Kidney (tissue), 22 donors: ENCODE measurements at regions of chr1 and their contacts with region 1.

Region 1: DNA sequence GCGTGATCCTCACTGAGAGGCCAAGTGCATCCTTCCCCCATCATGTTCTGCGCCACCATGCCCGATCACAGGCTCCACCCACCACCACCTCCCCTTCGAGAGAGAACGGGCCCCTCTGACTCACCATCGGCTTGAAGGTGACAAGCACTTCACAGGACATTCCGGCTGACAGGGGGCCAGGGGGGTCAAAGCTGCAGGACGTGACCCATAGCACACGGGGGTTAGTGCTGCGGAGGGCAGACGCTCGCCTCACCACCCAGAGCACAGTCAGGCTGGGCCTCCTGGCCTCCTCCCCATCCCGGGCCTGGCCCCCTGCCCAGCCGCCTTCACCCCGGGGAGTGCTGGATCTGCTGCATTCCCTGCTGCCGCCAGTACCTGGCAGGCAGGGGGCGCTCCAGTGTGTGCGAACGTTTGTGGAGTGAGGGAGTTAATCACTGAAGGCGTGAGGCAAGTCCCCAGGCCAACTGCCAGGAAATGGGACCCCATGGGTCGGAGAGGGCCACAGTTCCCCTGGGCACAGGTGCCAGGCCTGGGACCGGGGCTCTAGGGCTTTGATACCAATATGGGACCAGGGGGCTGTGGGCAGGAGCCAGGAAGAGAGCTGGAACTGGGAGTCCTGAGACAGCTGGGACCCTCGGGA is 40.9 kb upstream of the TMEM52 start:
- DNase-seq: peak; percentile 88 to 92 (median 90)
- H3K4me3 ChIP-seq: no peak overlapping the region
- H3K27ac ChIP-seq: no peak overlapping the region
- H3K4me1 ChIP-seq: no peaks in the 10 kb centered on the region
- H3K27me3 ChIP-seq: no peaks in the 10 kb centered on the region
- CTCF ChIP-seq: peak; percentile 70

Region 2: GRCh38 chr1:2044510-2045319 is 84.8 kb after region 1 on chr1:
- intact Hi-C with region 1: loop called (anchors 10 kb)
- DNase-seq: peak; percentile 71 to 89 (median 81)
- H3K4me3 ChIP-seq: no peak overlapping the region
- H3K27ac ChIP-seq: no peak overlapping the region
- H3K4me1 ChIP-seq: peaks cover 2 to 18% (median 5%) of the 10 kb centered on the region in 3 donors
- H3K27me3 ChIP-seq: peaks cover 2% of the 10 kb centered on the region
- CTCF ChIP-seq: peak; percentile 94

Region 3: DNA sequence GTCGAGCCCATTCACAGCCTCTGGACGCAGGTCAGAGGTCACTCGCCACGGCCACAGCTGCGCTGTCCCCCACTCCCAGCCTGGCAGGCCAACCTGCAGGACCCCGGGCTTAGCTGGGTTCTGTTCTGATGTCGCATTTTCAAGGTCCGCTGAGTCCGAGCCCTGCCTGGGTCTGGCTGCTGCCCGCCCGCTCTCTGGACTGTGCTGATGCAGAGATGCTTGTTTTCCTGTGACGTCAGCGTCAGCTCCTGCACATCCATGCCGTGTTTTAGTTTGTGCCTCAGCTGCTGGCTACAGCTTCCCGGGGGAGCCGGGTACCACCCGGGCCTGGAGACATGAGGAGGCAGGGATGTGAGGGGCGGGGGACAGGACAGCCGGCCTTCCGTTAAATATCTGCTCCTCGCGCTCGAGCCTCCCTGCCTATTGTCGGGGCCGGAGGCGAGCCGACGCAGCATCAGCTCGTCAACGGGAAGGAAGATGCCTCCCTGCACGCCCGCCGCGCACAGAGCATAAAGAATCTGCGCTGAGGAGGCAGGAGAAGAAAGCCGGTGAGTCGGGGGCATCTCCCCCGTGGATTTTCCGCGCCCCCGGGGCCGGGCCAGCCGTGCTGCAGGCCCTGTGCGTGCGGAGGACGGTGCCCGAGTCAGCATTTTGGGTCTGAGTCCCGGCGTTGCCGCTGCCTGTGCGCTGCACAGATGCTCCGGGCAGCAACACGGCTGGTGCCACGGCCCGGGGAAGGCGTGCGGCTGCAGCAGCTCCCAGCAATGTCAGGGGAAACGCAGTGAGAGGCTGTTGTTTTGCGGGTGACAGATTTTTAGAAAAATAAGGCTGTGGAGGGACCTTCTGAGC is 113.6 kb after region 1 on chr1:
- intact Hi-C with region 1: no loop called
- DNase-seq: peak; percentile 72 to 91 (median 90)
- H3K4me3 ChIP-seq: no peak overlapping the region
- H3K27ac ChIP-seq: no peak overlapping the region
- H3K4me1 ChIP-seq: peaks cover 0 to 2% (median 0%) of the 10 kb centered on the region in 3 donors
- H3K27me3 ChIP-seq: peaks cover 2% of the 10 kb centered on the region
- CTCF ChIP-seq: no peak